Calu3 (cell line): ENCODE measurements at regions of chr6 and their contacts with region 1.

Region 1: GRCh38 chr6:42745707-42746462 is at the start of gene TBCC:
- DNase-seq: peak; percentile 97
- H3K4me3 Mint-ChIP-seq: peak within 1 kb of the TSS; percentile 88
- H3K27ac Mint-ChIP-seq: peak within 1 kb of the TSS; percentile 92
- H3K4me1 Mint-ChIP-seq: peaks cover 26% of the 10 kb centered on the region
- H3K27me3 Mint-ChIP-seq: no peaks in the 10 kb centered on the region
- CTCF ChIP-seq: no peak
- total RNA-seq, gene TBCC: 36.2 and 42.7 TPM in 2 replicates

Region 2: GRCh38 chr6:42726485-42727086 is 19.3 kb before region 1 on chr6:
- CTCF ChIA-PET with region 1: interaction called, 14 read pairs
- intact Hi-C with region 1: no loop called
- DNase-seq: peak; percentile 78
- H3K4me3 Mint-ChIP-seq: peak overlapping the region; percentile 78
- H3K27ac Mint-ChIP-seq: no peak overlapping the region
- H3K4me1 Mint-ChIP-seq: peaks cover 16% of the 10 kb centered on the region
- H3K27me3 Mint-ChIP-seq: peaks cover 7% of the 10 kb centered on the region
- CTCF ChIP-seq: peak; percentile 87

Region 3: DNA sequence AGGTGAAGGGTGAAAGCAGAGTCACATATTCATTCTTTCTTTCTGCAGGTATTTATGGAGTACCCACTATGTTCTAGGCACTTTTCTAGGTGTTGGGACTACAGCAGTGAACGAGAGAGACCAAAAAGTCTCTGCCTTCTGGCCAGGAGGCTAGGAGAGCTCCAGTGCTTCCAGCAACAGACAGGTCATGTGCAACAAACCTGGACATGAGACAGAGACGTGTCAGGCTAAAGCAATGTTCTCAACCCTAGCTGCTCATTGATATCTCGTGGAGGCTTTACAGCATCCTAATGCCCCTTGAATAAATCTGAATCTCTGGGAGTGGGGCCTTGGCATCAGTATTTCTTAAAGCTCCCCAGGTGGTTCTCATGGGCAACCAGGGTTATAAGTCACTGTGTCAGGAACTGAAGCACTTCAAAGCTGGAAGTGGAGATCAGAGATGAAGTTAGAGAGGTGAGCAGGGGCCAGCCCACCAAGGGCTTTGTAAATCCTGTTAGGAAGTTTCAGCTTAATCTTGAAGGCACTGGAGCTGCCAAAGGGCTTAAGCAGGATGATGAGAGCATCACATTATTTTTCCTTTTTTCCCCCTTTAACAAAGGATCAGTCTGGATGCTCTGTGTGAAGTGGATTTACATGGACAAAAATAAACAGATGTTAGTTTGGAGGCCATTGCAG is 13.0 kb after region 1 on chr6:
- CTCF ChIA-PET with region 1: interaction called, 16 read pairs
- intact Hi-C with region 1: no loop called
- DNase-seq: no peak
- H3K4me3 Mint-ChIP-seq: no peak overlapping the region
- H3K27ac Mint-ChIP-seq: no peak overlapping the region
- H3K4me1 Mint-ChIP-seq: no peaks in the 10 kb centered on the region
- H3K27me3 Mint-ChIP-seq: no peaks in the 10 kb centered on the region
- CTCF ChIP-seq: no peak

Region 4: GRCh38 chr6:42769041-42769440 is 23.2 kb after region 1 on chr6:
- CTCF ChIA-PET with region 1: interaction called, 13 read pairs
- intact Hi-C with region 1: no loop called
- DNase-seq: no peak
- H3K4me3 Mint-ChIP-seq: no peak overlapping the region
- H3K27ac Mint-ChIP-seq: no peak overlapping the region
- H3K4me1 Mint-ChIP-seq: peaks cover 23% of the 10 kb centered on the region
- H3K27me3 Mint-ChIP-seq: no peaks in the 10 kb centered on the region
- CTCF ChIP-seq: no peak

Region 5: DNA sequence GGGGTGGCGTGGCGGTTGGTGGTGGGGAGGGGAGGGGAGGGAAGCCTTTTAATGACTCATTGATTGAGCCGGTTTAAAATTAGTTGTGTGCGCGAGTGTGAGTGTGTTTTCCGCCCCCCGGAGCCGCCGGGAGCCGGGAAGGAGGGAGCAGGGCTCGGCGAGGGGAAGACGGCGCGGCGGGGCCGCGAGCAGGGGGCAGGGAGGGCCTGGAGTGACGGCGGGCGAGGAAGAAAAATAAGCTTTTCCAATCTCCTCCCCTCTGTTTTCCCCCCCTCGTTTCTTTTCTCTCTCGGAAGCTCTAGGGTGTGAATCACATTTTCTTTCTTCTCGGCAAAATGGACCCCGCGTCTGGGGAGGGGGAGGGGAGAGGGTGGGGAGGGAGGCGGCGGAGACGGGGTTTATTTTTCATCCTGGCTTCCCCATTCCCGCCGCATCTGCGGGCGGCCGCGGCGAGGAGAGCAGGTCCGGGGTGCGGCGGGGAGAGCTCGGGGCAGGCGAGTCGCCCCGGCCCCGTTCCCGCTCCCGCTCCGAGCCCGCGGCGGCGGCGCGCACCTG is 36.8 kb after region 1 on chr6:
- CTCF ChIA-PET with region 1: interaction called, 10 read pairs
- intact Hi-C with region 1: loop called (anchors 1 kb)
- DNase-seq: peak; percentile 89
- H3K4me3 Mint-ChIP-seq: peak overlapping the region; percentile 91
- H3K27ac Mint-ChIP-seq: peak overlapping the region; percentile 99
- H3K4me1 Mint-ChIP-seq: peaks cover 40% of the 10 kb centered on the region
- H3K27me3 Mint-ChIP-seq: no peaks in the 10 kb centered on the region
- CTCF ChIP-seq: no peak

Region 6: DNA sequence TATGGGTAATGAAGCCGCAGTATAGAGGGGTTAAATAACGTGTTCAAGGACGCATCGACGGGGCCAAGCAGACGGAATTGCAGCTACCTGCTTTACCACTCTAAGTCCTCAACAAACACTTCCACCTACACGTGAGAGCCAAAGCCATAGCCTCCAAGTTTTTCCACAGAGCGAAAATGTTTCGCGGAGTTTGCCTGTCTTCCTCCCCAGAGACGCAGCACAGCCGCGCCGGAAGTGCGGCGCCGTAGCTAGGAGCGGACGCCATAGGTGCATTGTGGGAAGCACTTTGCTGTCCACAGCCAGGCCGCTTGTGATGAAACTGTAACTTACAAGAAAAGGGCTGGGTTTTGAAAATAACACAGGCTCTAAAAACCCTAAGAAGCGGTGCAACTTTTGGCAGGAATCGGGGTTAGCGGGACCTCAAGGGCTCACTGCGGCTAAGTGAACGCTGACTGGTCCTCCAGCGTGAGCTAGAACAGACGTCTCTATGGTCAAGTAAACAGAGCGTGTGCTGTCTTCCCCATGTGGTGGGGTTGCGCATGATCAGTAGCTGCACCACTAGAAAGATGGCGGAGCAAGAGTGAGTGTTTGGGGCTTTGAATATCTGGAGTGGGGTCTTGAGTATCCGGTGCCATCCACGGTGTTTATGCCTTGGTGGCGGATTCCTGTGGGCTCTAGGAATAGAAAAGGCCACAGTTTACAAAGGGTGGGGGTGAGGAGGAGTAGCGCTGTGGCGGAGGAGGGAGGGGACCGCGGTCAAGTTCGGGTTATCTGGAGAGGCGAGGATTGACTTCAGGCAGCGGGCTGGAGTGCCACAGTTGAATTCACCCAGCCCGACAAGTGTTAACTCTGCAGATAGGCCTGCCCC is 133.7 kb after region 1 on chr6 and contains the start of gene RPL7L1:
- CTCF ChIA-PET with region 1: interaction called, 12 read pairs
- intact Hi-C with region 1: loop called (anchors 5 kb)
- DNase-seq: peak; percentile 88
- H3K4me3 Mint-ChIP-seq: peak within 1 kb of the TSS; percentile 87
- H3K27ac Mint-ChIP-seq: peak within 1 kb of the TSS; percentile 99
- H3K4me1 Mint-ChIP-seq: no peaks in the 10 kb centered on the region
- H3K27me3 Mint-ChIP-seq: no peaks in the 10 kb centered on the region
- CTCF ChIP-seq: no peak
- total RNA-seq, gene RPL7L1: 144 and 154 TPM in 2 replicates